Activated naive CD4-positive, alpha-beta T cell treated with anti-CD3 and anti-CD28 coated beads, Interleukin-2, amount 10 ng/mL, durations not matched to agents 7 days and 5 days (primary cell): ENCODE measurements at regions of chr11 and their contacts with region 1.

Region 1: GRCh38 chr11:65471410-65471762 is 27.5 kb upstream of the MALAT1 start:
- DNase-seq: peak; percentile 41
- H3K4me3 Mint-ChIP-seq: no peak overlapping the region
- H3K27ac Mint-ChIP-seq: peak overlapping the region; percentile 95
- H3K4me1 Mint-ChIP-seq: peaks cover 32% of the 10 kb centered on the region
- H3K27me3 Mint-ChIP-seq: no peaks in the 10 kb centered on the region

Region 2: GRCh38 chr11:65459552-65459951 is 11.8 kb before region 1 on chr11:
- CTCF ChIA-PET with region 1: interaction called, 10 read pairs
- DNase-seq: no peak
- H3K4me3 Mint-ChIP-seq: no peak overlapping the region
- H3K27ac Mint-ChIP-seq: no peak overlapping the region
- H3K4me1 Mint-ChIP-seq: peaks cover 26% of the 10 kb centered on the region
- H3K27me3 Mint-ChIP-seq: peaks cover 14% of the 10 kb centered on the region

Region 3: DNA sequence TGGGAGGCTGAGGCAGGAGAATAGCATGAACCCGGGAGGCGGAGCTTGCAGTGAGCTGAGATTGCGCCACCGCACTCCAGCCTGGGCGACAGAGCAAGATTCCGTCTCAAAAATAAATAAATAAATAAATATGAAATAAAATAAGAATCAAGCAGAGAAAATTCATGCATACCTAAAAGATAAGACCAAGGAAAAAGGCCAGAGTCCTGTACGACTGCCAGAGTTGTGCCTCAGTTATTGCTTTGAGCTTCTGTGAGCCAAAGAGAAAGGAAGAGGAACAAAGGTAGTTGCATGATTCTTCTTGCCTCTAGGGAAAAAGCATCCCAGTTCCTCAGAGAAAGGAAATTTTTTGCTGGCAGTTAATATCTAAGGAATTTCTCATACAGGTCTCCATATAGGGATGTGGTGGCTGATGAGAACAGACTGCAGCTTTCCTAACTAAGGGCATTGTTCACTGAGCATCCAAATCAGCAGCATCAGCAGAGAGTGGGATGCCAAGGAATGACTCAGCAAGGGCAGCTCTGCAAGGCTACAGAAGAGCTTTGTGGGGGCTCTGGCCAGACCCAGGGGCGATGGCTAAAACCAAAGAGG is 10.0 kb after region 1 on chr11:
- CTCF ChIA-PET with region 1: no interaction called
- DNase-seq: no peak
- H3K4me3 Mint-ChIP-seq: no peak overlapping the region
- H3K27ac Mint-ChIP-seq: no peak overlapping the region
- H3K4me1 Mint-ChIP-seq: peaks cover 17% of the 10 kb centered on the region
- H3K27me3 Mint-ChIP-seq: peaks cover 30% of the 10 kb centered on the region

Region 4: GRCh38 chr11:65497141-65498041 is 26.0 kb after region 1 on chr11:
- CTCF ChIA-PET with region 1: interaction called, 21 read pairs
- DNase-seq: peak; percentile 99
- H3K4me3 Mint-ChIP-seq: no peak overlapping the region
- H3K27ac Mint-ChIP-seq: no peak overlapping the region
- H3K4me1 Mint-ChIP-seq: peaks cover 36% of the 10 kb centered on the region
- H3K27me3 Mint-ChIP-seq: peaks cover 4% of the 10 kb centered on the region

Region 5: DNA sequence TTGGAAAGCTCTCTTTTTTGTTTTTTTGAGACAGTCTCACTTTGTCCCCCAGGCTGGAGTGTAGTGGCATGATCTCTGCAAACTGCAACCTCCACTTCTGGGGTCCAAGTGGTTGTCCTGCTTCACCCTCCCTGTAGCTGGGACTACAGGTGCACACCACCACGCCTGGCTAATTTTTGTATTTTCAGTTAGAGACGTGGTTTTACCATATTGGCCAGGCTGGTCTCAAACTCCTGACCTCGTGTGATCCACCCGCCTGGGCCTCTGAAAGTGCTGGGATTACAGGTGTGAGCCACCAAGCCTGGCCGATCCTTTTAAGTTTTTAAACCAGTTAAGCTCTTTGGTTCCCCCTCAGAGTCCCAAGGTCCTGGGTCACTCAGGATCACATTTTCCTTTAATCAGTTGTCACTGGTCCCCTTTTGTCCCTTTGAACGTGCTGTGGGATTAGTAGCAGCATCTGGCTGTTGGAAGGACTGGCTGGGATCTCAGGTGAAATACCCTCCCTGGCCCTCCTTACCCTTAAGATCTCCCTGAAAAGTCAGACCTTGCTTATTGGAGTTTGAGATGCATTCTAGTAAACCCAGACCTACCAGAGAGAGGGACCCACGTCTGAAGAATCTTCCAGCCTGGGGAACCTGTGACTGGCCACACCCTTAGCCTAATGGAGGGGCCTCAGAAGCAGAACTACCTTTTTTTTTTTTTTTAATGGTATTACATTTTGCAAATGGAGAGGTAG is 35.6 kb after region 1 on chr11:
- CTCF ChIA-PET with region 1: interaction called, 26 read pairs
- DNase-seq: peak; percentile 44
- H3K4me3 Mint-ChIP-seq: no peak overlapping the region
- H3K27ac Mint-ChIP-seq: peak overlapping the region; percentile 84
- H3K4me1 Mint-ChIP-seq: peaks cover 50% of the 10 kb centered on the region
- H3K27me3 Mint-ChIP-seq: no peaks in the 10 kb centered on the region

Region 6: DNA sequence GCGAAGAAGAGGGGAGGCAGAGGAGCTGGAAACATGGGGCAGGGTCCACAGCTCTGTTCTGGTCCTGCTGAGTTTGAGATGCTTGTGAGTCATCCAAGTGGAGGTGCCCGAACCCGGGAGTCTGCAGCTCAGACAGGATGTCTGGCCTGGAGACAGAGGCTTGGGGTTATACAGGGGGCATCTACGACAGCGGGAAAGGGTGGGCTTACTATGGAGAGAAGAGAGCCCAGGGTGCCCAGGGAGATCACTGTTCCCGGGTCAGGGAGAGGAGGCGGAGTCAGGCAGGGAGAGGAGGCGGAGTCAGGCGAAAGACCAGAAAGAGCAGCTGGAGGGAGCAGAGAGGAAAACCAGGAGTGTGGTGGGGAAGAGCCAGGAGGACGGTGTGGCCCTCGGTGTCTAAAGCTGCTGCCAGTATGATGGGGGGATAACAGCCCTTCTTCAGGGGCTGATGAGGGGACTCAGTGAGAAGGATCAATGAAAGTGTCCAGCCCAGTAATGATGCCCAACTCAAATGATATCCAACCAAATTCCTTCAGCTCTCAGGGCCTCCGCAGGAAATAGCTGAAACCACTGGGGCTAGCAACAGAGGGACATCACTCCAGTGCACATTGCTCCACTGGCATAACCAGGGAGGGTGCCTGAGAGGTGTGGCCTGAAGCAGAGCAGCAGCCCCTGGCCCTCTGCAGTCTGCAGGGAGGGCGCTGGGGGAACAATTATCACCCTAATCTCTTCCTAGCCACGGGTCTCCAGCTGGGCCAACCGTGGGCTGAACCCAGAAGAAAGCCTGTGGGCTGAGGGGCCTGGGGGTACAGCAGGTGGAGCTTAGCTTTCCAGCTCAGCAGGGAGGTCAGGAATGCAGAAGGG is 89.4 kb after region 1 on chr11:
- CTCF ChIA-PET with region 1: no interaction called
- DNase-seq: no peak
- H3K4me3 Mint-ChIP-seq: no peak overlapping the region
- H3K27ac Mint-ChIP-seq: no peak overlapping the region
- H3K4me1 Mint-ChIP-seq: peaks cover 59% of the 10 kb centered on the region
- H3K27me3 Mint-ChIP-seq: peaks cover 17% of the 10 kb centered on the region